Activated T-helper 1 cell treated with anti-CD3 and anti-CD28 coated beads, Interleukin-12 subunit alpha, Interleukin-12 subunit beta, Interleukin-2, Interleukin-4 antibody, amounts not matched to agents 30 ng/mL and 10 ng/mL and 1 ng/mL, durations not matched to agents 14 hours and 24 hours and 36 hours (primary cell): ENCODE measurements at regions of chr18 and their contacts with region 1.

Region 1: DNA sequence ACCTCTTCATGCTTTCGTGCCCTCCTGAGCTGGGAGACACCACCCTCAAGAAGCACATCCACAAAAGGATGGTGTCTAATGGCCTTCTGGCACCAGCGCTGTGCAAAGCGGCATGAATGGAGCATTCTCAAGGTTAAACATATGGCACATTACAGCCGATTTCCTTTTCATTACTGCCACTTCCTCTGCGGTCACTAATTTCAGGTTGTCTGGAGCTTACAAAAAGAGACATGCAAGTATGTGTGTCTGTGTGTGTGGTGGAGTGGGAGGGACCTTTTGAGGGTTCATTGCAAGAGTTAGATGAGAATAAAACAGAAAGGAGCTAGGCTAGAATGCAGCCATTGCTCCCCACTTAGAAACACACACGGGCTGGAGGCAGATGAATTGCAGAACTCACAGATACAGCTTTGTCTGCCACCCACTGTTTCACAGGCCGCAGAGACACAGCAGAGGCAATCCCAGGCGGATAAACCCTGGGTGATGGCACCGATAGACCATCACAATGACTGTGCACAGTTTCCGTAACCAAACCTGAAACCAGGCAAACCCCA is 76.0 kb downstream of the TGIF1 start:
- DNase-seq: peak; percentile 17
- H3K4me3 Mint-ChIP-seq: no peak overlapping the region
- H3K27ac Mint-ChIP-seq: peak overlapping the region; percentile 49
- H3K4me1 Mint-ChIP-seq: peaks cover 14% of the 10 kb centered on the region
- H3K27me3 Mint-ChIP-seq: no peaks in the 10 kb centered on the region

Region 2: GRCh38 chr18:3380384-3380961 is 145.5 kb before region 1 on chr18:
- intact Hi-C with region 1: no loop called
- DNase-seq: no peak
- H3K4me3 Mint-ChIP-seq: no peak overlapping the region
- H3K27ac Mint-ChIP-seq: no peak overlapping the region
- H3K4me1 Mint-ChIP-seq: peaks cover 7% of the 10 kb centered on the region
- H3K27me3 Mint-ChIP-seq: no peaks in the 10 kb centered on the region

Region 3: GRCh38 chr18:3481696-3482210 is 44.2 kb before region 1 on chr18:
- intact Hi-C with region 1: loop called (anchors 5 kb)
- DNase-seq: no peak
- H3K4me3 Mint-ChIP-seq: no peak overlapping the region
- H3K27ac Mint-ChIP-seq: no peak overlapping the region
- H3K4me1 Mint-ChIP-seq: no peaks in the 10 kb centered on the region
- H3K27me3 Mint-ChIP-seq: peaks cover 8% of the 10 kb centered on the region

Region 4: DNA sequence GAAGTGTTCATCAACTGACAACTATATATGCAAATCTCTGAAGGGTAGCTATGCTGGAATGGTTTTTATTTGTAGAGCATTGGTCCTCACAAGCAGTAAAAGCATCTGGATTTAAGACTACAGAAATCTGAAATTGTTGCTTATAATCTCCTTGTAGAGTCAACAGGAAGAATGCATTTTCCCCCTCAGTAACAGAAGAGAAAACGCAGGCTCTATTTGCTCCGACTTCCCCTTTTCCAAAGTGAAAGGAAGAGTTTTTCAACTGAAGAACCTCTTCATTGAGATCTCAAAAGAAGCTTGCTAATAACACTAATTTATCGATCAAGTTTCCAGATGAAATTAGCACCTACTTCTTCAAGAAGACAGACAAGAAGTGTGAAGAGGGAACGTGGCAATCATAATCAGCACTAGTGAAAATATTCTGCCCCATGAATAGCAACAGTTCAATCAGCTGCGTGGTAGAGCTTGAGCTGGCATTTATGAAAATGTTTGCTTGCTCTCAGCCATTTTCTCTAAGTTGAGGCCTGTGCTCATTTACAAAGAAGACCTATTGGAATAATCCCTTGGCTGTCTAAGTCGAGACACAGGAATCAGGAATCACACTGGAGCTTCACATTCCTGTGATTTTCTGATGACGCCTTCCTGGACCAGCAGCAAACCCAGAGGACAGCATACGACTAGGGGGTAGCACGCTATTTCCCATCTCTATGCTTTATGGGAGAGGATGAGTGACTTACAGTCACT is 32.3 kb before region 1 on chr18:
- intact Hi-C with region 1: no loop called
- DNase-seq: no peak
- H3K4me3 Mint-ChIP-seq: no peak overlapping the region
- H3K27ac Mint-ChIP-seq: no peak overlapping the region
- H3K4me1 Mint-ChIP-seq: peaks cover 5% of the 10 kb centered on the region
- H3K27me3 Mint-ChIP-seq: peaks cover 31% of the 10 kb centered on the region

Region 5: DNA sequence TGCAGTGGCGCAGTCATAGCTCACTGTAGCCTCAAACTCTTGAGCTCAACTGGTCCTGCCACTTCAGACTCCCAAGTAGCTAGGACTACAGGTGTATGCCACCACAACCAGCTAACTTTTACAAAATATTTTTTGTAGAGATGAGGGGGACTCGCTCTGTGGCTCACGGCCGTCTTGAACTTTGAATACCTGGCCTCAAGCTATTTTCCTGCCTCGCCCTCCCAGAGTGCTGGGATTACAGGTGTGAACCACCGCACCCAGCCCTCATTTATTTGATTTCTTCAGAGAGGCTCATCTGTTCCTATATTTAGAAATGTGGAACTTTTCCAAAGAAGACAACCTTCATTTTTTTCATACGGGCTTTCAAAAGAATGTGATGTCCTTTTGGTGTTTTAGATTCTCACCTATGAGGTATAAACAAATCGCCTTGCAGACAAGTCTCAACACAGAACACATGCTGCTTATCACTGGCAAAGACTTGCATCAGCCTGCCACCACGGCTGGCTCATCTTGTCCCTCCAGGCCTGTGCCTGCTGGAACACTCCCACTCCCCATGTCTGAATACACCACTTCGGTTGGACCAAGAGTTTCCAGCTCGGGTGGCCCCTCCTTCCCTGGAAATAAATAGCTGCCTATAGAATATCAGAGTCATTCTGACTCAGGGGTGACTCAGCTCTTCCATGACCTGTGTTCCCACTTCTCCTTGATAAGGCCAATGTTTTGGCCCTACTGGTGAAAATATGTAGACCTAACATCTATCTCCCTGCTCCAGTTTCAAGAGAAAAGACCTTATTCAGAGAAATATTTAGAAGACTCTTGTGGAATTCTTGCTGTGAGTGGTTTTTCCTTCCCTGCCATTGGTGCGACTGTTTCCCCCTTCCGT is 126.7 kb after region 1 on chr18:
- intact Hi-C with region 1: loop called (anchors 5 kb)
- DNase-seq: peak; percentile 12
- H3K4me3 Mint-ChIP-seq: peak overlapping the region; percentile 51
- H3K27ac Mint-ChIP-seq: peak overlapping the region; percentile 90
- H3K4me1 Mint-ChIP-seq: peaks cover 54% of the 10 kb centered on the region
- H3K27me3 Mint-ChIP-seq: peaks cover 2% of the 10 kb centered on the region